ENCODE measurements at regions of chr1 and their contacts with region 1.

Region 1: GRCh38 chr1:109041621-109042468 is at the start of gene WDR47:
- DNase-seq: peak; percentile 96
- H3K4me3 Mint-ChIP-seq: peak within 1 kb of the TSS; percentile 91
- H3K27ac Mint-ChIP-seq: peak within 1 kb of the TSS; percentile 92
- H3K4me1 Mint-ChIP-seq: peaks cover 11% of the 10 kb centered on the region
- H3K27me3 Mint-ChIP-seq: no peaks in the 10 kb centered on the region
- total RNA-seq, gene WDR47: 11.5 and 14.4 TPM in 2 replicates

Region 2: GRCh38 chr1:108877348-108878159 is 164.3 kb before region 1 on chr1:
- intact Hi-C with region 1: loop called (anchors 1 kb)
- DNase-seq: no peak
- H3K4me3 Mint-ChIP-seq: peak overlapping the region; percentile 89
- H3K27ac Mint-ChIP-seq: peak overlapping the region; percentile 48
- H3K4me1 Mint-ChIP-seq: peaks cover 45% of the 10 kb centered on the region
- H3K27me3 Mint-ChIP-seq: peaks cover 6% of the 10 kb centered on the region

Region 3: DNA sequence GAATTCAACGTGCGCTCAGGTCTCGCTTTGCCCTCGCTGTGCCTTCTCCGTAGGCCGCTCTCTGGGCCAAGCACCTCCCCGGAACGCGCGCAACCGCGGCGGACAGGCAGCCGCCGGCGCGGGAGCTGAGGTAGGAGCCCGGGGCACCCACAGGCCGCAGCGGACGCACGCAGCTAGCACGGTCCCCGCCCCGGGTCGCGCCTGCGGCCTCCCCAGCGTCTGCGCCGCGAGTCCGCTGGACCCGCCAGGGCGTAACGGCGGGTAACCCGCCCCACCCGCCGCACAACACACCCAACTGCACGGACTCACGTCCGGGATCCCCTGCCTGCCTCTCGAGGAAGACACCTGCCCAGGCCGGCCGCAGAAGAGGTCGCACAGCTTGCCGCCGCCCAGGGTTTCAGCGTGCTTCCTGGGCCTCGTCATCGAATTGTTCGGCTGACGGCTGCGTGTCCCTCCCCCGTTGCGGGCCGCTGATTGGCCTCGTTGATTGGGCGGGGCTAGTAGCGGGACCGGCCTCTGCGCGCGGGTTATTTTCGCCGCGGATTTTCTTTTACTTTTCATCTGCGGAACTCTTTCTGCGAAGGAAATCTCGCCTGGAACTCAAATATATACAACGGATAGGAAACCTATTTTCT is 78.7 kb before region 1 on chr1 and contains the start of gene CLCC1:
- intact Hi-C with region 1: loop called (anchors 2 kb)
- DNase-seq: peak; percentile 93
- H3K4me3 Mint-ChIP-seq: peak within 1 kb of the TSS; percentile 89
- H3K27ac Mint-ChIP-seq: peak within 1 kb of the TSS; percentile 94
- H3K4me1 Mint-ChIP-seq: peaks cover 26% of the 10 kb centered on the region
- H3K27me3 Mint-ChIP-seq: peaks cover 4% of the 10 kb centered on the region
- total RNA-seq, gene CLCC1: 23.1 and 23.4 TPM in 2 replicates

Region 4: DNA sequence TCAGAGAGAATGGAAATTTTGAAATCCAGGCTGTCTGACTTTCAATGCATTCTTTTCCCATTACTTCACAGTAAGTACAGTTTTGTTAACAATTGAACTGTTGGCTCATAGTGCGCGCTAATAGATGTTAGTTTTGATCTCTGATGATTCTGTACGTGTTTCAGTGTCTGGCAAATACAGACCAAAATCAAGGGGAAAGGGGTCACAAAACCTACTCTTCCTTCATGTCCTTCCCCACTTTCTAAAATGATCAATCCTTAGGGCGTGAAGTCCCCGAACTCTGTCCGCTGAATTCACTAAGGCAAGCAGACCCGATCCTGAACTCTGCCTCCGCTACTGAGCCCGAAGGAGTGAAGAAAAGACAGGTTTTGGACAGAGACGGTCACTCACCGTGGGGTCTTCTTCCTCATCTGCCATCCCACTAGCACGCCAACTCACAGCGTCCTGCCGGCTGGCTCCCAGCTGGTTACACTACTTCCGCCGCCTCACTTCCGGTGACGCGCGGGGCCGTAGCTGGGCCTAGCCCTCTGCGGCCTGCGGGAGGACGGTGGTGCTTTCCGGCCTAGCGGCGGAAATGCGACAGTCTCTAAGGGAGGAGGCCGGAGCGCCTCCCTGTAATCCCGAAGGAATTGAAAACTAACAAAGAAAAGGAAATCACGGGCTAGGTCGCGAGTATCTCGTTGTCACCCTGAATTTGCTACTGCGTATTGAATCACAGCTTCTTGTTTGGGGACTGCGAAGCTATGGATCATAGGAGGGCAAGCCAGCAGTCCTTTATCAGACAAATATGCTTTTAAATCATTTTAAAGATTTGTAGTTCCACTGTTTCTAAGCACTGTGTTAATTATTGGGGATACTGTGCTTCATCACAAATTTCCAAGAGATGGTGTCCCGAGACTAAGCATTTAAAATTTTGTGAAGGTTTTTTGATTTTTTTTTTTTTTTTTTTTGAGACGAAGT is 34.0 kb after region 1 on chr1 and contains the start of gene TAF13:
- intact Hi-C with region 1: loop called (anchors 1 kb)
- DNase-seq: peak; percentile 87
- H3K4me3 Mint-ChIP-seq: peak within 1 kb of the TSS; percentile 99
- H3K27ac Mint-ChIP-seq: peak within 1 kb of the TSS; percentile 88
- H3K4me1 Mint-ChIP-seq: peaks cover 20% of the 10 kb centered on the region
- H3K27me3 Mint-ChIP-seq: peaks cover 1% of the 10 kb centered on the region
- total RNA-seq, gene TAF13: 28.8 and 32.6 TPM in 2 replicates

Region 5: GRCh38 chr1:109090196-109091077 is 48.6 kb after region 1 on chr1 and contains the start of gene TMEM167B:
- intact Hi-C with region 1: loop called (anchors 1 kb)
- DNase-seq: peak; percentile 84
- H3K4me3 Mint-ChIP-seq: peak within 1 kb of the TSS; percentile 92
- H3K27ac Mint-ChIP-seq: peak within 1 kb of the TSS; percentile 93
- H3K4me1 Mint-ChIP-seq: peaks cover 21% of the 10 kb centered on the region
- H3K27me3 Mint-ChIP-seq: peaks cover 2% of the 10 kb centered on the region
- total RNA-seq, gene TMEM167B: 26.2 and 27.6 TPM in 2 replicates

Region 6: GRCh38 chr1:109099938-109100773 is 58.3 kb after region 1 on chr1:
- intact Hi-C with region 1: loop called (anchors 1 kb)
- DNase-seq: peak; percentile 95
- H3K4me3 Mint-ChIP-seq: peak overlapping the region; percentile 97
- H3K27ac Mint-ChIP-seq: peak overlapping the region; percentile 98
- H3K4me1 Mint-ChIP-seq: peaks cover 10% of the 10 kb centered on the region
- H3K27me3 Mint-ChIP-seq: no peaks in the 10 kb centered on the region

Measured in activated T-helper 1 cell treated with anti-CD3 and anti-CD28 coated beads, Interleukin-12 subunit alpha, Interleukin-12 subunit beta, Interleukin-2, Interleukin-4 antibody, amounts not matched to agents 30 ng/mL and 10 ng/mL and 1 ng/mL, durations not matched to agents 14 hours and 24 hours and 36 hours (primary cell).